ENCODE measurements at regions of chr21 and their contacts with region 1.

Region 1: DNA sequence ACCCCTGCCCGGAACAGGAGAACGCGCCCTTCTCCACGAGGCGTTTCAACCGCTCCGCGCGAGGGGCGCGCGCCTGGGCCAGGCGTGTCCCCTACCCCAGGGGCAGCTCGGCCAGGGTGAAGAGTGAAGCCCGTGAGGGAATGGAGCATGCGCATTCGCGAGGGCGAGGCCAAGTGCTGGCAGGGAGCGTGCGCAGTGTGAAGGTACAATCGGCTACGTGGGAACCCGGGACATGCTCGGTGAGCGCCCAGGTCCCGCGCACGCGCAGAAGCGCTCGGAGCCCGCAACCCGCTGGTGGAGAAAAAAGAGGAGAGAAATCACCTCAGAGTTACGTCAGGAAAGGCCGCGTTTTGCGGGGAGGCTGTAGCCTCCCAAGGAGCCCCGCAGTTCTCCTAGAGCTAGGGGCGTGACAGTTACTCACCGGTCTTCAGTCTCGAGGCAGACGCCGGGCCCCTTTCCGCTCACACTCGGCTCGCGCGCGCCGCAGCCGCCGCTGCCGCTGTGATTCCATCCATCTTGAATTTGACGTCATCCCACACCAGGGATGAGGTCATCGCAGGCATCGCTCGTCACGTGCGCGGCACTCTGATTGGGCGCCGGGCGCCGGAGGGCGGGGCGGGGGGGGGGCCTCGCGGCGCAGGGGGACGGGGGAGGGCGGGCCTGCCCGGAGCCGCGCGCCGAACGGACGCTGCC is at the start of gene ZBTB21:
- DNase-seq: peak in 1 of 2 donors; percentile 99
- H3K4me3 ChIP-seq: peak within 1 kb of the TSS; percentile 71 to 99
- H3K27ac ChIP-seq: peak within 1 kb of the TSS; percentile 98
- H3K4me1 ChIP-seq: peaks cover 25% of the 10 kb centered on the region
- H3K27me3 ChIP-seq: no peaks in the 10 kb centered on the region
- CTCF ChIP-seq: no peak
- POLR2A ChIP-seq: peak in 1 of 2 donors; percentile 80
- total RNA-seq, gene ZBTB21: 16.7 TPM

Region 2: DNA sequence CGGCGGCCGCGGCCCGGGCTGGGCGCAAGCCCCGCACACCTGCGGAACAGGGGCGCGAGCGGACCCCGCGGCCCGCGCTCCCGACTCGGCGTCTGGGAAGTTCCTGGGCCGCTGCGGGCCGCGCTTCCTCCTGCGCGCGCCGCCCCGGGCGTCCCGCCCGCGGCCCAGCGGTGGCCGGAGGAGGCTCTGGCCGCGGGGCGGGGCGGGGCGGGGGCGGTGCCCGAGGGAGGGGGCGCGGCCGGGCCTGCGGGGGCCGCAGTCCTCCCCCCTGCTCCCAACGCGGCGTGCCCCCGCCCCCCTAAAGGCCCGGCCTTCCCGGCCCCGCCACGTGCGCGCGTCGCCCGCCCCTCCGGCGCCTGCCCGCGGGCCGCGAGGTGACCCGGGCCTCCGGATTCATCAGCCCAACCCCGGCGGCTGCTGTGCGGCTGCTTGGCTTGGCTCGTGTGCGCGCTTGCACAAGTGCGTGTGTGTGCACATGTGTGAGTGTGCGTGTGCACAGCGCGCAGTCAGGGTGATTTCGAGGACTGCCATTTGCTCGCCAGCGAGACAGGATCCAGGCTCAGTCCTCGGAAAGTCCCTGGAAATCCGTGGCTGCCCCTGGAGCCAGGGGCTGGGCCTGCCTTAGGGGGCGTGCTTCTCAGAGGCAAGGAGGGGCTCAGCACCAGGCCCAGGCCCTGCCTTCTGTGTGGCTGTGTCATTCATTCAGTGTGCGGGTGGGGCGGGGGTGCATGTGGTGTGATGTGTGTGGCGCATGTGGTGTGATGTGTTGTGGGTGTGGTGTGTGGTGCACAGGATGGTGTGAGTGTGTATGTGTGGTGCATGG is 55.9 kb before region 1 on chr21 and contains the start of gene C2CD2:
- intact Hi-C with region 1: loop called (anchors 10 kb)
- DNase-seq: no peak
- H3K4me3 ChIP-seq: peak within 1 kb of the TSS; percentile 67 to 75
- H3K27ac ChIP-seq: peak within 1 kb of the TSS; percentile 77
- H3K4me1 ChIP-seq: peaks cover 71% of the 10 kb centered on the region
- H3K27me3 ChIP-seq: no peaks in the 10 kb centered on the region
- CTCF ChIP-seq: no peak
- POLR2A ChIP-seq: peak in 1 of 2 donors; percentile 45
- total RNA-seq, gene C2CD2: 36.1 TPM

Region 3: DNA sequence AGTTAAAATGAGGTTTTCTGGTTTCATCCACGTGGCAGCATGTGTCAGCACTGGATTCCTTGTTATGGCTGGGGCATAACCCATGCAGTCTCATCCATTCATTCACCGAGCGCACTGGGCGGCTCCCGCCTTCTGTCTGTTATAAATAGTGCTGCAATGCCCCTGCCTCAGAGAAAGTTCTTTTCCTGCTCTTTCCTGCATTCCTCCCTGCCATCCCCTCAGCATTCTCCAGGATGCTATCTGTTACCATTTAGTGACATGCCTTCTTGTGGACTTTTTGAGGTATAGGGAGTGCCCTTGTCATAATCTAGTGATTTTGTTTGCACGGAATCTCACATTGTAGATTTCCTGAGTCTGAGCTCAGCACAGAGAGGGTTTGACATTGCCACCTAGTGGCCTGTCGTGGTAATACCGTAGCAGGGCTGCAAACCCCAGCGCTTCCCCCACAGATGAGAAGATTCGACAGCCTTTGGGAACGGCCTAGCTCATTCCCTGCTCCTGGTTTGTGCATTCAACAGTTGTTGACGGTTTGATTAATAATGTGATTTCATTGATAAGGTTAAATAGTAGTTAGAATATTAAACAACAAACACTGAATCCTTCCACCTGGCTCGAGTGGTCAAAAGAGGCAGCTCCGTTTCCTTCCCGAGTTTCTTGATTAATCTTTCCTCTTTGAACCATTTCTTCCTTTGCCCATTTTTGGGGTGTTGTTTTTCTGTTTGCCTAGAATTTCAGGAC is 107.4 kb after region 1 on chr21:
- intact Hi-C with region 1: loop called (anchors 10 kb)
- DNase-seq: no peak
- H3K4me3 ChIP-seq: no peak overlapping the region
- H3K27ac ChIP-seq: peak overlapping the region; percentile 21
- H3K4me1 ChIP-seq: peaks cover 18% of the 10 kb centered on the region
- H3K27me3 ChIP-seq: no peaks in the 10 kb centered on the region
- CTCF ChIP-seq: peak; percentile 78 to 96 (median 93)
- POLR2A ChIP-seq: no peak

Measured in vagina (tissue), 2 donors.